CD4-positive, alpha-beta T cell (primary cell): ENCODE measurements at regions of chr11 and their contacts with region 1.

Region 1: GRCh38 chr11:95790123-95790932 is at the start of gene CEP57:
- DNase-seq: peak; percentile 87 to 97 (median 90)
- ATAC-seq: peak; percentile 54
- H3K4me3 ChIP-seq: peak within 1 kb of the TSS; percentile 93
- H3K4me3 Mint-ChIP-seq: peak within 1 kb of the TSS; percentile 96
- H3K27ac ChIP-seq: peak within 1 kb of the TSS; percentile 99 to 100
- H3K27ac Mint-ChIP-seq: peak within 1 kb of the TSS; percentile 100
- H3K4me1 ChIP-seq: peaks cover 24% of the 10 kb centered on the region
- H3K4me1 Mint-ChIP-seq: peaks cover 61% of the 10 kb centered on the region
- H3K27me3 ChIP-seq: no peaks in the 10 kb centered on the region
- H3K27me3 Mint-ChIP-seq: no peaks in the 10 kb centered on the region
- CTCF ChIP-seq: no peak
- total RNA-seq, gene CEP57: 43.5 to 46.6 TPM

Region 2: GRCh38 chr11:93784152-93784934 is 2006.0 kb before region 1 on chr11 and contains the start of gene MED17:
- CTCF ChIA-PET with region 1: no interaction called
- POLR2A ChIA-PET with region 1: no interaction called
- intact Hi-C with region 1: loop called in 1 of 2 experiments (anchors 10 kb)
- DNase-seq: peak; percentile 79 to 95 (median 86)
- ATAC-seq: peak; percentile 96
- H3K4me3 ChIP-seq: peak within 1 kb of the TSS; percentile 97
- H3K4me3 Mint-ChIP-seq: peak within 1 kb of the TSS; percentile 89
- H3K27ac ChIP-seq: peak within 1 kb of the TSS; percentile 86 to 90
- H3K27ac Mint-ChIP-seq: peak within 1 kb of the TSS; percentile 81
- H3K4me1 ChIP-seq: peaks cover 32% of the 10 kb centered on the region
- H3K4me1 Mint-ChIP-seq: peaks cover 53% of the 10 kb centered on the region
- H3K27me3 ChIP-seq: no peaks in the 10 kb centered on the region
- H3K27me3 Mint-ChIP-seq: no peaks in the 10 kb centered on the region
- CTCF ChIP-seq: no peak
- total RNA-seq, gene MED17: 63.1 to 63.6 TPM

Region 3: GRCh38 chr11:94543695-94544645 is 1246.4 kb before region 1 on chr11 and contains the start of gene FUT4:
- CTCF ChIA-PET with region 1: no interaction called
- POLR2A ChIA-PET with region 1: interaction called, 4 read pairs
- intact Hi-C with region 1: loop called in 1 of 2 experiments (anchors 5 kb)
- DNase-seq: peak; percentile 46 to 84 (median 62)
- ATAC-seq: peak; percentile 79
- H3K4me3 ChIP-seq: peak within 1 kb of the TSS; percentile 82
- H3K4me3 Mint-ChIP-seq: peak within 1 kb of the TSS; percentile 99
- H3K27ac ChIP-seq: peak within 1 kb of the TSS; percentile 61 to 93
- H3K27ac Mint-ChIP-seq: peak within 1 kb of the TSS; percentile 95
- H3K4me1 ChIP-seq: peaks cover 33% of the 10 kb centered on the region
- H3K4me1 Mint-ChIP-seq: peaks cover 51% of the 10 kb centered on the region
- H3K27me3 ChIP-seq: no peaks in the 10 kb centered on the region
- H3K27me3 Mint-ChIP-seq: no peaks in the 10 kb centered on the region
- CTCF ChIP-seq: peak; percentile 5
- total RNA-seq, gene FUT4: 4.3 to 5.1 TPM

Region 4: DNA sequence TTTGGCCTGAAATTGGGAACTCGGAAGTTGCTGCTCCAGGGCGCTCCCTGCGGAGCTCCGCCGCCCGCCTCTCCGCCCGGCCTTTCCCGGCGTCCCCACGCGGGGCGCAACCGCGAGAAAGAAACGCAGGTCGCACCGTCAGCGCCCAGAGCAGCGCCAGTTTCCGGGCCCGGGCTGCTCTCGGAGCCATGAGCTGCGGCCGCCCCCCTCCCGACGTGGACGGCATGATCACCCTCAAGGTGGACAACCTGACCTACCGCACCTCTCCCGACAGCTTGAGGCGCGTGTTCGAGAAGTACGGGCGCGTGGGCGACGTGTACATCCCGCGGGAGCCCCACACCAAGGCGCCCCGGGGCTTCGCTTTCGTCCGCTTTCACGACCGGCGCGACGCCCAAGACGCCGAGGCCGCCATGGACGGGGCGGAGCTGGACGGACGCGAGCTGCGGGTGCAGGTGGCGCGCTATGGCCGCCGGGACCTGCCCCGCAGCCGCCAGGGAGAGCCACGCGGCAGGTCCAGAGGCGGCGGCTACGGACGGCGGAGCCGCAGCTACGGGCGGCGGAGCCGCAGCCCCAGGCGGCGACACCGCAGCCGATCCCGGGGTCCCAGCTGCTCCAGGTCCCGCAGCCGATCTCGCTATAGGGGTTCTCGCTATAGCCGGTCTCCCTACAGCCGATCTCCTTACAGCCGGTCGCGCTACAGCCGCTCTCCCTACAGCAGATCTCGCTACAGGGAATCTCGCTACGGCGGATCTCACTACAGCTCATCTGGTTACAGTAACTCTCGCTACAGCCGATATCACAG is 723.1 kb before region 1 on chr11:
- CTCF ChIA-PET with region 1: interaction called, 7 read pairs
- POLR2A ChIA-PET with region 1: interaction called, 145 read pairs
- intact Hi-C with region 1: loop called (anchors 2 to 5 kb)
- DNase-seq: peak; percentile 53 to 88 (median 69)
- ATAC-seq: peak; percentile 63
- H3K4me3 ChIP-seq: peak overlapping the region; percentile 95
- H3K4me3 Mint-ChIP-seq: peak overlapping the region; percentile 98
- H3K27ac ChIP-seq: peak overlapping the region; percentile 87 to 90
- H3K27ac Mint-ChIP-seq: peak overlapping the region; percentile 99
- H3K4me1 ChIP-seq: peaks cover 12% of the 10 kb centered on the region
- H3K4me1 Mint-ChIP-seq: peaks cover 38% of the 10 kb centered on the region
- H3K27me3 ChIP-seq: no peaks in the 10 kb centered on the region
- H3K27me3 Mint-ChIP-seq: no peaks in the 10 kb centered on the region
- CTCF ChIP-seq: peak; percentile 60

Region 5: DNA sequence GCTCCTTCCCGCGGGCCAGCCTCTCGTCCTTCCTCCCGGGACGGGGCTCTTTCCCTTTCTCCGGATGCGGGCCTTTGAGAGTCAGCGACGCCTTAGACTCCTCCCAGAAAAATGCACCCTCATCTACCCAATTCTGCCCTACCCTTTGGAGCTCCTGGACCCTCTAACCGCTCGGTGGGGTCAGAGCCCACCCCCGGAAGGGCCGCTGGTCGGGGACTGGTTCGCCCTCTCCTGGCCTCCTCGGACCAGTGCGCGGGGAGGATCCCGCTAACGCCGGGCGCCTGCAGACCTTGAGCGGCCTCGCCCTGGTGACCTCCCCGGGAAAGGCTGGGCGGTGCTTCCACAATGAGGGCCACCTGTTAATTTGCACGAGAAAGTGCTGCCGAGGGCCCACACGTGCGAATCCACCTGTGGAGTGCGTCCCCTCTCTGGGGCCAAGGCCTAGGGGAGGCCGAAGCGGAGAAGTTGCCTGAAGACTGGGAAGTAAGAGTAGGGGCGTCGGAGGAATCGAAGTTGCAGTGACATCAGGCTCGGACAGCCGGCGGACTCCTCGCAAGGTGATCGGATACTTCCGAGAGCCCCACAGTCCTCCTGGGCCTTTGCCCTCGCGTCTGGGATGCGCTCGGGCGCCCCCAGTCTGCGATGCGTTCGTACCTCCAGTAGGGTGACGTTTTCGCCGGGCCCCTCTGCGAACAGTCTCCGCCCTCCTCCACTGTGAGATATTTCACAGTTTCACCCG is 639.2 kb before region 1 on chr11:
- CTCF ChIA-PET with region 1: interaction called, 5 read pairs
- POLR2A ChIA-PET with region 1: interaction called, 52 read pairs
- intact Hi-C with region 1: loop called in 1 of 2 experiments (anchors 1 kb)
- DNase-seq: peak; percentile 83 to 96 (median 88)
- ATAC-seq: peak; percentile 92
- H3K4me3 ChIP-seq: peak overlapping the region; percentile 74
- H3K4me3 Mint-ChIP-seq: peak overlapping the region; percentile 92
- H3K27ac ChIP-seq: peak overlapping the region; percentile 69 to 72
- H3K27ac Mint-ChIP-seq: peak overlapping the region; percentile 97
- H3K4me1 ChIP-seq: peaks cover 49% of the 10 kb centered on the region
- H3K4me1 Mint-ChIP-seq: peaks cover 37% of the 10 kb centered on the region
- H3K27me3 ChIP-seq: no peaks in the 10 kb centered on the region
- H3K27me3 Mint-ChIP-seq: peaks cover 4% of the 10 kb centered on the region
- CTCF ChIP-seq: peak; percentile 97

Region 6: DNA sequence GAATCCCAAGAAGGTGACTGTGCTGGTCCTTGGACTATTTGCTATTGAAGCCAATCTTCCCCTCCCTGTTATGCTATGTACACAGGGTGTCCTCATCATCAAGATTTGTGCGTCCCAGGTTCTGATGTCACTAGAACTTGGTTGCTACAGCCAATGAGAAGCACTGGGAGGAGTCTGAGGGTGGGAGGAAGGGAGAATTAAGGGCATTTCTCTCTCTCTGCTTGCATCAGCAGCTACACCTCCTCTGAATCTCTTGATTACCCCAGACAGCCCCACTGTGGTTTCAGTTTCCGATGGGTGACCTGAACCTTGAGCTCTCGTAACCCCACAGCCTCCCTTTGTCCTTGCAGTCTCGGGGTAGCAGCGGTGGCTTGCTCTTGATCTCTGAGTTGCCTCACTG is 346.9 kb before region 1 on chr11:
- CTCF ChIA-PET with region 1: no interaction called
- POLR2A ChIA-PET with region 1: no interaction called
- intact Hi-C with region 1: no loop called
- DNase-seq: peak in 6 of 14 experiments; percentile 4 to 49 (median 30)
- ATAC-seq: peak; percentile 79
- H3K4me3 ChIP-seq: no peak overlapping the region
- H3K4me3 Mint-ChIP-seq: no peak overlapping the region
- H3K27ac ChIP-seq: no peak overlapping the region
- H3K27ac Mint-ChIP-seq: no peak overlapping the region
- H3K4me1 ChIP-seq: peaks cover 10% of the 10 kb centered on the region
- H3K4me1 Mint-ChIP-seq: peaks cover 10% of the 10 kb centered on the region
- H3K27me3 ChIP-seq: no peaks in the 10 kb centered on the region
- H3K27me3 Mint-ChIP-seq: no peaks in the 10 kb centered on the region
- CTCF ChIP-seq: no peak

Region 7: DNA sequence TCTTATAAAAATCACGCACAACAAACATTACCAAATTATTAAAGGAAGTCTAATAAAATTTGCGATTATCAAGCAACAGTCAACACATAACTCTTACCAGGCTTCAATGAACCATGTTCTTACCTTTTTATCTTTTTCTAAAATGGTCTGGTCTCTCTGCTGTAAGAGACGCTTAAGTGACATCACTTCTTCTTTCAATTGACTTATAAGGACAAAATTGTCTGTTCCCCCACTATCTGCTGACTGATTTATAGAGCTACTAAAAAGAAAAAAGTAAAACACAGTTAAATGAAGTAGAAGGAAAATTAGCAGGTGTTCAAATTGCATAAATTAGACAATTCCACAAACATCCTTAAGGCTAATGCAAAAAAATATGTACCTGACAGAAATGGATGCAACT is 11.6 kb before region 1 on chr11:
- CTCF ChIA-PET with region 1: no interaction called
- POLR2A ChIA-PET with region 1: interaction called, 23 read pairs
- intact Hi-C with region 1: no loop called
- DNase-seq: no peak
- ATAC-seq: no peak
- H3K4me3 ChIP-seq: no peak overlapping the region
- H3K4me3 Mint-ChIP-seq: no peak overlapping the region
- H3K27ac ChIP-seq: no peak overlapping the region
- H3K27ac Mint-ChIP-seq: no peak overlapping the region
- H3K4me1 ChIP-seq: no peaks in the 10 kb centered on the region
- H3K4me1 Mint-ChIP-seq: peaks cover 23% of the 10 kb centered on the region
- H3K27me3 ChIP-seq: no peaks in the 10 kb centered on the region
- H3K27me3 Mint-ChIP-seq: no peaks in the 10 kb centered on the region
- CTCF ChIP-seq: no peak

Region 8: GRCh38 chr11:96168623-96169022 is 378.3 kb after region 1 on chr11:
- CTCF ChIA-PET with region 1: no interaction called
- POLR2A ChIA-PET with region 1: no interaction called
- intact Hi-C with region 1: no loop called
- DNase-seq: peak in 3 of 14 experiments; percentile 19 to 58 (median 45)
- ATAC-seq: no peak
- H3K4me3 ChIP-seq: no peak overlapping the region
- H3K4me3 Mint-ChIP-seq: no peak overlapping the region
- H3K27ac ChIP-seq: no peak overlapping the region
- H3K27ac Mint-ChIP-seq: peak overlapping the region; percentile 42
- H3K4me1 ChIP-seq: peaks cover 29% of the 10 kb centered on the region
- H3K4me1 Mint-ChIP-seq: peaks cover 95% of the 10 kb centered on the region
- H3K27me3 ChIP-seq: no peaks in the 10 kb centered on the region
- H3K27me3 Mint-ChIP-seq: no peaks in the 10 kb centered on the region
- CTCF ChIP-seq: no peak

Region 9: DNA sequence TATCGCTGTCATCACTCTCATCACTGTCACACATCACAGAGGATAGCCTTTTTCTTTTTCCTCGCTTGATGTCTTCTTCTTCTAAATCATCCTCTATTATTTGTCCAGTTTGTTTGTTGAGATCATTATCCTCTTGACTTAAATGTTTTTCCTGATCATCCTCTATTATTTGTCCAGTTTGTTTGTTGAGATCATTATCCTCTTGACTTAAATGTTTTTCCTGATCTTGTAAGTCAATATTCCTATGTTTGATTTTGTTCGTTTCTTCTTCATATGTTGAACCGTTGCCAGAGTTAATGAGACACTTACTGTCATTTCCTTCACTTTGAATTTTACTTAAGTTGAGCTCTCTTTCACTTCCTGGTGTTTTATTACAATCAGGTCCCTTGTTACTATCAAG is 593.8 kb after region 1 on chr11:
- CTCF ChIA-PET with region 1: no interaction called
- POLR2A ChIA-PET with region 1: interaction called, 45 read pairs
- intact Hi-C with region 1: no loop called
- DNase-seq: no peak
- ATAC-seq: no peak
- H3K4me3 ChIP-seq: no peak overlapping the region
- H3K4me3 Mint-ChIP-seq: peak overlapping the region; percentile 23
- H3K27ac ChIP-seq: no peak overlapping the region
- H3K27ac Mint-ChIP-seq: peak overlapping the region; percentile 64
- H3K4me1 ChIP-seq: peaks cover 5% of the 10 kb centered on the region
- H3K4me1 Mint-ChIP-seq: peaks cover 49% of the 10 kb centered on the region
- H3K27me3 ChIP-seq: no peaks in the 10 kb centered on the region
- H3K27me3 Mint-ChIP-seq: no peaks in the 10 kb centered on the region
- CTCF ChIP-seq: no peak